Posterior vena cava (tissue), 2 donors: ENCODE measurements at regions of chr9 and their contacts with region 1.

Region 1: DNA sequence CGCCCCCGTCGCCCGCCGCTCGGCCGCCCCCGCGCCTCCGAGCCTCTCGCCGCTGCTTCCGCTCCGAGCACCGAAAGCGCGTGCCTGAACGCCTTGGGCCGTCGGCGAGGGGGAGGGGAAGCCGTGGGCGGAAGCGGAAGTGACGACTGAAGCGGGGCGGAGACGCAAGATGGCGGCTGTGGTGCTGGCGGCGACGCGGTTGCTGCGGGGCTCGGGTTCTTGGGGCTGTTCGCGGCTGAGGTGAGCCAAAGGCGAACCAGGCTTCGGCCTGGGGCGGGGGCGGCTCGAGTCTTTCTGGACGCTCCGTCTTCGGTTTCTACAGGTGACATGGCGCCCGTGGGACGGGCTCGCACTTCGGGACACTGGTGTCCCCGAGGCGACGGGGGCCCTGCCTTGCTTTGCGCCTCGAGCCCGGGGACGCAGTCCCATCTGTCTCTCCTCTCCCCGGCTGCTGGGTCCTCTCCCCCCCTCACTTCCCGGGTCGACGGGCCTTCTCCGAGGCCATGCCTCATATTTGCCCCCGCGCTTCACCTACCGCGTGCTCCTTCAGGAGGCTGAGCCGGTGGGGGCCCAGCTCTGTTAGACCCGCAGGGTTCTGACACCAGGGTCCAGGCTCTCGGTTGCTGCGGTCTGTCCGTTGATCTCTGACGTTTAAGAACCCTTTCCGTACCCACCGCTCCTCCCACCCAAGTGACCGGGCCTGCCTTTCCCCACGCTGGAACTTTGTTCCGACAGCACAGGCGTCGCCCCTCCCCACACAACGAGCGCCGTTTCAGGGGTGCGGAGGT is at the starts of genes ENTR1 and PMPCA:
- DNase-seq: peak; percentile 98
- total RNA-seq, gene ENTR1: 28.7 to 29.3 TPM
- total RNA-seq, gene PMPCA: 30.8 to 31.2 TPM

Region 2: DNA sequence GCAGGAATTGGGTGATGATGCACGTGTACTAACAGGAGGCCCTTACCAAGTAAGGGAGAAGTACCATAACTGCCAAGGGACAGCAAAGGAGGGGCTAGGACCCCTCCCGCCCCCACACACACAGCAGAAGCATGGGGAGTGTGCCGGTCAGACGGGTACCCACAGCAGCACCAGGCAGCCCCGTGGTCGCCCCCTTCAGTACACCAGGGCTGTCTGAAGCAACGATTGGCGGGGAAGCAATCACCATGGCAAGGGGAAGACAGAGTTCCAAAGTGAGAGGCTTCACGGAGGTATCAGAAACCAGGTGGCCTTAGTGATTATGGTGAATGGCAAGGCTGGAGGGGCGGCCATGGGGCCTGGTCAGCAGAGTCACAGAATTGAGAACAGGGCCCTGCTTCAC is 575.6 kb before region 1 on chr9:
- intact Hi-C with region 1: no loop called
- DNase-seq: no peak

Region 3: GRCh38 chr9:136441681-136442245 is 31.1 kb after region 1 on chr9:
- intact Hi-C with region 1: loop called in 1 of 2 experiments (anchors 1 kb)
- DNase-seq: no peak